CD14-positive monocyte (primary cell): ENCODE measurements at regions of chr5 and their contacts with region 1.

Region 1: DNA sequence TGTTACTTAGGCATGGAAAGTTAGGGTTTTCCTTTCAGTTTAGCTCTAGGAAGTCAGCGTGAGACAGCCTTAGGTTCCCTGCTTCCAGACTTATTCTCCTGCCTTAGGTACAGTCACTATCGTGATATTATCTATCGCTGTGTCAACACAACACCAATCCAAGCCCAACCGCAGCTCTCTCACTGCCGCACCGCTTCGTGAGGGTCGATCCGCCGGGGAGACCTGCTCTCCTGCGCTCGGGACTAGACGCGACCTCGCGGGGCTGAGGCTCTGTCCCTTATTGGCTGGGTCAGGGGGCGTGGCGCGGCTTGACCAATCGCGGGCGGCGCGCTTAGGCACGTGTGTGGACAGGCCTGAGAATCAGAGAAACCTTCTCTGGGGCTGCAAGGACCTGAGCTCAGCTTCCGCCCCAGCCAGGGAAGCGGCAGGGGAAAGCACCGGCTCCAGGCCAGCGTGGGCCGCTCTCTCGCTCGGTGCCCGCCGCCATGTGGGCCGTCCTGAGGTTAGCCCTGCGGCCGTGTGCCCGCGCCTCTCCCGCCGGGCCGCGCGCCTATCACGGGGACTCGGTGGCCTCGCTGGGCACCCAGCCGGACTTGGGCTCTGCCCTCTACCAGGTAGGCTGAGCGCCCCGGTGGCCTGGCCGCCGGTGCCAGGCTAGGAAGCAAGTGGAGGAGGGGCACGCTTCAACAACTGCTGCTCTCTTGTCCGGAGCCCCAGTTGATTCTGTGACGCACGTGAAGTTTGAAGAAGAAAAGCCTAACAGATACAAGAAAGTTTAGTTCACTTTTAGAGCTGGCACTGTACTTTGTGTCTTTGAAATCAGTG is at the start of gene MCCC2:
- DNase-seq: peak; percentile 94 to 97 (median 96)
- H3K4me3 ChIP-seq: peak within 1 kb of the TSS; percentile 74 to 92 (median 75)
- H3K4me3 Mint-ChIP-seq: peak within 1 kb of the TSS; percentile 98 to 100
- H3K27ac ChIP-seq: peak within 1 kb of the TSS; percentile 73 to 82
- H3K27ac Mint-ChIP-seq: peak within 1 kb of the TSS; percentile 94 to 99 (median 99)
- H3K4me1 ChIP-seq: peaks cover 14 to 15% of the 10 kb centered on the region in 2 donors
- H3K4me1 Mint-ChIP-seq: peaks cover 32% of the 10 kb centered on the region
- H3K27me3 ChIP-seq: no peaks in the 10 kb centered on the region
- H3K27me3 Mint-ChIP-seq: peaks cover 0 to 2% (median 0%) of the 10 kb centered on the region in 3 donors
- CTCF ChIP-seq: no peak
- polyA plus RNA-seq, gene MCCC2: 15.4 to 21.9 (median 16.5) TPM

Region 2: DNA sequence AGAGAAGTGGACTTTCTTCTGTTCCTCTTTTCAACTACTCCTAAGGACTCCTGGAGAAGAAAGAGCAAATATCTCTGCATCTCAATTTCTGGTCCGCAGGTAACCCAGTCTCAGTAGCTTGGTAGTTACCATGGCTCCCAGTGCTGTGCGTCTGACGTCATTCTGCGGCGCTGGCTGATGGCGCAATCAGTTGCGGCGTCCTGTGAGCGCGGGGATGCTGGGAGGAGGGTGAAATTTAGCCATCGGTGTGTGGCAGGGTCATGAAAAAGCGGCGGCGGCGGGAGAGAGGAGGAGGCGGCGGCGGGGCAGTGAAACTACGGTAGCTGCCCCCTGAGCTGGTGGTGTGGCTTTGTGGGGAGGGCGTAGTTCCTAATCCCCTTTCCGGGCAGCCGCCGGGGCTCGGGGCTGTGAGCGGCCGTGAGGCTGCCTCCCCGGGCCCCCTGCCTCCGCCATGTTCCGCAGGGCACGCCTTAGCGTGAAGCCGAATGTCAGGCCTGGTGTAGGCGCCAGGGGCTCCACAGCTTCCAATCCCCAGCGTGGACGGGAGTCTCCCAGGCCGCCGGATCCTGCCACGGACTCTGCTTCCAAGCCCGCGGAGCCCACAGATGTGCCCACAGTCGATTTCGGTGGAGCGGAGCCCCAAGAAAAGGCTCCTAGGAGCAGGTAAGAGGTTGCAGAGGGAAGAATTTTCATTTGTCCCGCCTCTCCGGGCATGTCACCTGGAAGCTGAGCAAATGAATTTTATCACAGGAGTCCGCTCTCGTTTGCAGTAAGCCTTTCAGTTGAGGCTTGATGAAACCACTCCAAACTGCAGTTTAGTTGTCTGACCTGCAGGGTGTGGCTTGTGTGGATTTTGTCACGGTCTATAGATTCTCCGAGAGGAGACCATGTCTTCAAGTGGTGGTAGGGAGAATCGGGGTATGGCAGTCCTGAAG is 131.5 kb before region 1 on chr5 and contains the start of gene BDP1:
- intact Hi-C with region 1: loop called in 1 of 2 experiments (anchors 10 kb)
- DNase-seq: peak; percentile 86 to 89 (median 88)
- H3K4me3 ChIP-seq: peak within 1 kb of the TSS; percentile 53 to 90 (median 71)
- H3K4me3 Mint-ChIP-seq: peak within 1 kb of the TSS; percentile 97 to 99
- H3K27ac ChIP-seq: peak within 1 kb of the TSS; percentile 66 to 88
- H3K27ac Mint-ChIP-seq: peak within 1 kb of the TSS; percentile 92 to 98 (median 97)
- H3K4me1 ChIP-seq: peaks cover 9 to 15% of the 10 kb centered on the region in 2 donors
- H3K4me1 Mint-ChIP-seq: peaks cover 22% of the 10 kb centered on the region
- H3K27me3 ChIP-seq: peaks cover 0 to 8% of the 10 kb centered on the region in 2 donors
- H3K27me3 Mint-ChIP-seq: peaks cover 10 to 19% (median 11%) of the 10 kb centered on the region in 3 donors
- CTCF ChIP-seq: peak; percentile 52
- polyA plus RNA-seq, gene BDP1: 2.0 to 6.6 (median 2.7) TPM

Region 3: GRCh38 chr5:71492817-71493615 is 94.1 kb before region 1 on chr5:
- intact Hi-C with region 1: no loop called
- DNase-seq: no peak
- H3K4me3 ChIP-seq: no peak overlapping the region
- H3K4me3 Mint-ChIP-seq: no peak overlapping the region
- H3K27ac ChIP-seq: no peak overlapping the region
- H3K27ac Mint-ChIP-seq: no peak overlapping the region
- H3K4me1 ChIP-seq: no peaks in the 10 kb centered on the region
- H3K4me1 Mint-ChIP-seq: no peaks in the 10 kb centered on the region
- H3K27me3 ChIP-seq: no peaks in the 10 kb centered on the region
- H3K27me3 Mint-ChIP-seq: peaks cover 0 to 2% (median 0%) of the 10 kb centered on the region in 3 donors
- CTCF ChIP-seq: no peak